SK-N-SH (cell line): ENCODE measurements at regions of chr1 and their contacts with region 1.

Region 1: DNA sequence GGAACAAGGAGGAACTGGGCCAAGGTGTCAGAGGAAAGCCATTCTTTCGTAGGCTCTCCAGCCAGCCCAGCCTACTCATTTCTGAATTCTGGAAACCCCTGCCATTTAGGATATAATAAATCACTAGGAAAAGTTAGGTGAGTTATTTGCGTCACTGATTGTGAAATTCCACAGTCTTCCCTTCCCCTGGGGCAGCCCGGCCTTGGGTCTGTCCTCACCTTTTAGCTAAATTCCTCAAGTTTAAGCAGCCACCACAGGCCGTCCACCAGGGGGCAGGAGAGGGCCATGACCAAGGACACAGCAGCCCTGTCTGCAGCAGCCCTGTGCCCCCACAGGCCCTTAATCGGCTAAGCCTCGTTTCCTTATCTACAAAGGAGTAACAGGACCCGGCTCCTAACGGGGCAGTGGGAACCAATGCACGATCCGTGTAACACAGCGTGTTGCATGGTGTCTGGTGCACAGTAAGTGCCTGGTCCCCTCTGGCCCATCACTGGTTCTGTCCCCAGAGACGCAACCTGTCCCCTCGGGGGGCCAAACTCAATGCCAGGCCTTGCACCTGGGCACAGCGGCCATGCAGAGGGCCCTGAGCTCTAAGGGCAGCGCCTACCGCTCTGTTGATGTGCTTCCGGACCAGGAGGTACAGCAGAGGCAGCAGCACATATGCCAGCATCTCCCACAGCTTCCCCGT is 18.1 kb downstream of the GPR157 start:
- DNase-seq: peak; percentile 87
- H3K4me3 ChIP-seq: peak overlapping the region in 1 of 2 experiments; percentile 24; a peak in 1 of 4 replicates
- H3K27ac ChIP-seq: no peak overlapping the region
- H3K4me1 ChIP-seq: peaks cover 0 to 2% of the 10 kb centered on the region in 2 experiments; a peak in 1 of 4 replicates
- H3K27me3 ChIP-seq: no peaks in the 10 kb centered on the region
- CTCF ChIP-seq: peak; percentile 90
- EP300 ChIP-seq: no peak
- RAD21 ChIP-seq: peak; percentile 85

Region 2: DNA sequence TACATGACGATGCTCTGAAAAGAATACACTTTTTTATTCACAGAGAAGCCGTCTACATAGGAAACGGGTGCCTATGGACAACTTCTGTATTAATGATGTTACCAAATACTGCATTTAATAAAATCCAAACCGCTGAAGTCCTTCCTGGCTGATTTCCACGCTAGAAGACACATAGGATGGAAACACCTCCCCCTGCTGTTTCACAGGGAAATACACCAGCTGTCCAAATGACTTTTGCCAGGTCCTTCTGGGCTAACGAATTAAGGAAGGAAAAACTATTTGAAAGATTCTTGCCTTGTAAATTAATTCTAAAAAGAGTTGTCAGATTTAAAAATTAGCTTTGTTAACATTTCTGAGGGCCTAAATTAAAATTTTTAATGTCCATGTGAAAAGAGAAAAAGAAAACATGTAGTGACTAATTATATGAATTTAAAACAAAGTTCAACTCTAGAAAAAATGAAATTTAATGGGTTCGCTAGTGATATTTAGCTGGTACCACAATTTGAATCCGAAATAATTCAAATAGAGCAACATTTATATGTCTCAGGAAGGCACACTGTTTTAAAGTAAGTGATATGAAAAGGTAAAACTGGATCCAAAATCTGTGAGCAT is 439.4 kb before region 1 on chr1:
- CTCF ChIA-PET with region 1: no interaction called
- POLR2A ChIA-PET with region 1: no interaction called
- DNase-seq: peak; percentile 60
- H3K4me3 ChIP-seq: no peak overlapping the region
- H3K27ac ChIP-seq: no peak overlapping the region; a peak in 1 of 4 replicates
- H3K4me1 ChIP-seq: peaks cover 30 to 52% of the 10 kb centered on the region in 2 experiments
- H3K27me3 ChIP-seq: no peaks in the 10 kb centered on the region
- CTCF ChIP-seq: peak; percentile 81
- EP300 ChIP-seq: no peak
- RAD21 ChIP-seq: peak; percentile 84

Region 3: GRCh38 chr1:9093581-9093980 is 17.2 kb before region 1 on chr1:
- CTCF ChIA-PET with region 1: interaction called, 79 read pairs
- POLR2A ChIA-PET with region 1: no interaction called
- DNase-seq: no peak
- H3K4me3 ChIP-seq: no peak overlapping the region
- H3K27ac ChIP-seq: no peak overlapping the region
- H3K4me1 ChIP-seq: no peaks in the 10 kb centered on the region
- H3K27me3 ChIP-seq: no peaks in the 10 kb centered on the region; the same call in 1 of the 2 replicates
- CTCF ChIP-seq: no peak
- EP300 ChIP-seq: no peak
- RAD21 ChIP-seq: no peak

Region 4: DNA sequence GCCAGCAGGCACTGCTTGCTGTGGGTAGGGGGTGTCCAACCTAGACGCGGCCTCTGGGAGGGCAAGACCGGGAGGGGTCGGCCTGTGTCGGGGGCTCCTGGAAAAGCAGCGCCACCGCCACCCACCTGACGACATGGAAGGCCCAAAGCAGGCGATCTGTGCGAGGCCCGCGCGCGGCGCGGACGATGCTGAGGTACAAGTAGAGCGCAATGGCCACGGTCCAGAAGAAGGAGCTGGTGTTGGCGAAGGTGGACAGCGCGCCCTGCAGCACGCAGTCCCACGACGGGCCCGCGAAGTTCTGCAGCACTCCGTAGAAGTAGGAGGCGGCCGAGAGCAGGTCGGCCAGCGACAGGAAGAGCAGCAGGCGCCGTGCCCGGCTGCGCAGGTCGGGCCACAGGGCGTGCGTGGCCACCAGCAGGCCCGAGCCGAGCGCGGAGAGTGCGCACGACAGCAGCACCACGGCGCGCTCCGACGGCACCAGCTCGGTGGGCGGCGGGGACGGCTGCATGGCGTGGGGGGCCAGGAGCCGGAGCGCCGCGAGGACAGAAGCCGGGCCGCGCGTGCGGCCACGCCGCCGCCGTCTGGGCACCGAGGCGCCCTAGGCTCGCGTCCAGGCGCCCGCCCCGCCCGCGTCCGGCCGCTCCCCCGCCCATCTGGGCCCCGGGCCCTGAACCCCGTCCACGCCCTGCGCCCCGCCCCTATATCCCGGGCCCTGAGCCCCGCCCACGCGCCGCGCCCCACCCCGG is 17.9 kb after region 1 on chr1 and contains the start of gene GPR157:
- CTCF ChIA-PET with region 1: interaction called, 36 read pairs
- POLR2A ChIA-PET with region 1: no interaction called
- DNase-seq: no peak
- H3K4me3 ChIP-seq: peak within 1 kb of the TSS; percentile 57 to 59
- H3K27ac ChIP-seq: peak within 1 kb of the TSS in 1 of 2 experiments; percentile 5; a peak in 1 of 4 replicates
- H3K4me1 ChIP-seq: peaks cover 0 to 16% of the 10 kb centered on the region in 2 experiments; a peak in 1 of 4 replicates
- H3K27me3 ChIP-seq: no peaks in the 10 kb centered on the region
- CTCF ChIP-seq: no peak
- EP300 ChIP-seq: no peak
- RAD21 ChIP-seq: no peak
- polyA plus RNA-seq, gene GPR157: 1.8 and 2.1 TPM in 2 replicates

Region 5: DNA sequence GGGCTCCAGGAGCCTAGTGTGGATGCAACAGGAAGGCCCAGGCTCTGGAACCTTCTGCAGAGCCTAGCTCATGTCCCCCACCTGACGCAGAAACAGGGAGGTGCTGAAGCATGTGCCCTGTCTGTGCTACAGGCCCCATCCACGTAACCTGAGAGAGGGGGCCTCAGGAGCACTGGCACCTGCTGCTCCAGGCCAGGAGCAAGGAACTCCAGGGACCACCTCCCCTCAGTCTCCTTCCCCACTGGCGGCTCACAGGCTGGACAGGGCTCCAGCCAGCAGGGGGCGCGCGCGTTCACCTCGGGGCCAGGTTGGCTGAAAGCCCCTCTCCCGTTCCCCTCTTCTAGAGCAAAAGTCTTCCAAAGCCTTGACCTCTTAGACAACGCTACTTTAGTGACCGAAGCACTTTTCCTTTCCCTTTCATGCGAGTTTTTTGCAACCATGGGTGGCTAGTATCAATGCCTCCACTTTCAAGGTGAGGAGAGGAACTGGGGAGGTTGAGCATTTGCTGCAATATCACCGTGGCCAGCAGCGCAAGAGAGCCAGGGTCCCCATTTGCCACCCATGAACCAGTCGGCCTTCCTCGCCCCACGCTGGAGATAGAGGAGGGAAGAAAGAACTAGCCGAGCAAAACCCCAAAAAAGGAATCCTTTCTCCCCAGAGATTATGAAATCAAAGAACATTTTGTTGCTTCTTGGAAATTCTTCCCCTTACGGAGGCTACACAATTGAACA is 70.5 kb after region 1 on chr1:
- CTCF ChIA-PET with region 1: interaction called, 14 read pairs
- POLR2A ChIA-PET with region 1: no interaction called
- DNase-seq: peak; percentile 86
- H3K4me3 ChIP-seq: peak overlapping the region; percentile 75 to 87
- H3K27ac ChIP-seq: peak overlapping the region; percentile 77 to 89
- H3K4me1 ChIP-seq: peaks cover 0 to 32% of the 10 kb centered on the region in 2 experiments; a peak in 1 of 4 replicates
- H3K27me3 ChIP-seq: no peaks in the 10 kb centered on the region
- CTCF ChIP-seq: peak; percentile 92
- EP300 ChIP-seq: no peak
- RAD21 ChIP-seq: peak; percentile 31; the same call in 1 of the 2 replicates

Region 6: GRCh38 chr1:9201401-9202239 is 90.8 kb after region 1 on chr1:
- CTCF ChIA-PET with region 1: interaction called, 138 read pairs
- POLR2A ChIA-PET with region 1: no interaction called
- DNase-seq: peak; percentile 40
- H3K4me3 ChIP-seq: peak overlapping the region; percentile 47 to 54
- H3K27ac ChIP-seq: no peak overlapping the region
- H3K4me1 ChIP-seq: peaks cover 0 to 14% of the 10 kb centered on the region in 2 experiments; a peak in 1 of 4 replicates
- H3K27me3 ChIP-seq: no peaks in the 10 kb centered on the region; the same call in 1 of the 2 replicates
- CTCF ChIP-seq: no peak
- EP300 ChIP-seq: no peak
- RAD21 ChIP-seq: no peak

Region 7: GRCh38 chr1:9284061-9284460 is 173.2 kb after region 1 on chr1:
- CTCF ChIA-PET with region 1: no interaction called
- POLR2A ChIA-PET with region 1: no interaction called
- DNase-seq: no peak
- H3K4me3 ChIP-seq: no peak overlapping the region
- H3K27ac ChIP-seq: no peak overlapping the region
- H3K4me1 ChIP-seq: peaks cover 0 to 18% of the 10 kb centered on the region in 2 experiments; a peak in 2 of 4 replicates
- H3K27me3 ChIP-seq: no peaks in the 10 kb centered on the region
- CTCF ChIP-seq: no peak
- EP300 ChIP-seq: no peak
- RAD21 ChIP-seq: no peak